GM10248 (cell line): ENCODE measurements at regions of chr20 and their contacts with region 1.

Region 1: GRCh38 chr20:9458138-9458796 is 56.1 kb upstream of the LAMP5 start:
- DNase-seq: no peak
- CTCF ChIP-seq: peak; percentile 20

Region 2: GRCh38 chr20:9427430-9428291 is 30.6 kb before region 1 on chr20:
- CTCF ChIA-PET with region 1: no interaction called
- POLR2A ChIA-PET with region 1: no interaction called
- DNase-seq: no peak
- CTCF ChIP-seq: no peak

Region 3: DNA sequence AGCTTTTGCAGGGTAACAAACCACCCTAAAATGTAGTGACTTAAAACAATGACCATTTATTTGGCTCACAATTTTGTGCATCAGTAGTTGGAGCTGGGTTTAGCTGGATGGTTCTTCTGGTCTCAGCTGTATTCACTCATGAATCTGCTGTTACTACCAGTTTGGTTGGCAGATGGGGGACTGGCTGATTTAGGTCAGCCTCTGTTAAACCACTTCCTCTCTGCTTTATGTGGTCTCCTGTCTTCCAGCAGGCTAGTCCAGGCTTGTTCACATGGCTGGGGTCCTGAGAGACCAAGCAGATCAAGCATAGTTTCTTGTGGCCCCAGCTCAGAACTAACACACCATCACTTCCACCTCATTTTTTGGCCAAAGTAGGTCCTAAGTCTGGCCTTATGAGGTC is 11.1 kb before region 1 on chr20:
- CTCF ChIA-PET with region 1: interaction called, 28 read pairs
- POLR2A ChIA-PET with region 1: no interaction called
- DNase-seq: no peak
- CTCF ChIP-seq: no peak

Region 4: GRCh38 chr20:9609887-9610502 is 151.7 kb after region 1 on chr20:
- CTCF ChIA-PET with region 1: interaction called, 15 read pairs
- POLR2A ChIA-PET with region 1: no interaction called
- DNase-seq: peak; percentile 42
- CTCF ChIP-seq: peak; percentile 55